ENCODE measurements at regions of chr10 and their contacts with region 1.

Region 1: DNA sequence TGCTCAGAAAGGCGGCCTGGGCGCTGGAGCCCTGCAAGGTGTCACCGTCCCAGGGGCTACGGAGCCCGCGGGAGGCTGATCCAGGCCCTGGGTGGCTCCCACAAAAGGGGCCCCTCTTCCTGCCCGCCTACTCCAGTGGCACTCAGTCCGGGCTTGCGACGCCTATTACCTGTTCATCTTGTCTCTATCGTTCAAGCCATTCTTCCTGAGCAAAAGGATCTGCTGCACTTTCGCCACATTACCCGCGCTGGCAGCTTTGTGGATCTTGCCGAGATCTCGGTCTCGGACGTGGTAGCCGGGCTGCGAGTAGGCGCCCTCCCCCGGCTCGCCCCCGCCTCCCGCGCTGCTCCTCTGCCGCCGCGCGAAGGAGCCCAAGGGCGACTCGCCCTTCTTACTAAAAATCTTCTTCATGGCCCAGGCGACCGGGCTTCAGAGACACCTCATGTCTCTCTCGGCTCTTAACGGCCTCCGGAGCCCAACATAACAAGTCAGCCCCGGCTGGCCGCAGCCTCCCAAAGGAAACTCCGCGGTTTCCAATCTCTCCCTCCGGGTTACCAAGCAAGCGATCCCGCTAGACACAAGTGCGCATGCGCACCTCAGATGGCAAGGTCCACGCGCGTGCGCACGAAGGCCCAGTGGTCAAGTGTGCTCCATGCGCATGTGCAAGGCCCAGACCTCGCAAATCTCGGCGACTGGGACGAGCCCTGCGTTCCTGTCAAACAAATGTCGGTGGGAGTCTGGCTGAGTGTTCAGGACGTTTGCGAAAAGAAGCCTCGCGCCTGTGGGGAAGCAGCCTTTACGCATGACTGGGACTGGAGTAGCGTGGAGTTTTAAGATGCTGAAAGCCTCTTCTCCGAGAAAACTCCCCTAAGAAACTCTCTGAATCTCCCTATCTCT is at the start of gene ANKRD26:
- DNase-seq: peak; percentile 98 to 99
- ATAC-seq: peak; percentile 94 to 97 (median 95)
- H3K4me3 ChIP-seq: peak within 1 kb of the TSS; percentile 99
- H3K27ac ChIP-seq: peak within 1 kb of the TSS; percentile 94
- H3K4me1 ChIP-seq: peaks cover 8% of the 10 kb centered on the region
- H3K27me3 ChIP-seq: no peaks in the 10 kb centered on the region
- CTCF ChIP-seq: no peak
- total RNA-seq, gene ANKRD26: 7.0 to 9.8 (median 8.7) TPM

Region 2: GRCh38 chr10:27147701-27148100 is 47.5 kb after region 1 on chr10:
- intact Hi-C with region 1: loop called in 1 of 2 experiments (anchors 5 kb)
- DNase-seq: no peak
- ATAC-seq: peak in 3 of 4 donors; percentile 50 to 62 (median 57)
- H3K4me3 ChIP-seq: no peak overlapping the region
- H3K27ac ChIP-seq: no peak overlapping the region
- H3K4me1 ChIP-seq: peaks cover 9% of the 10 kb centered on the region
- H3K27me3 ChIP-seq: no peaks in the 10 kb centered on the region
- CTCF ChIP-seq: no peak

Region 3: GRCh38 chr10:27625452-27626211 is 525.5 kb after region 1 on chr10:
- intact Hi-C with region 1: no loop called
- DNase-seq: no peak
- ATAC-seq: no peak
- H3K4me3 ChIP-seq: no peak overlapping the region
- H3K27ac ChIP-seq: no peak overlapping the region
- H3K4me1 ChIP-seq: no peaks in the 10 kb centered on the region
- H3K27me3 ChIP-seq: peaks cover 0 to 12% (median 0%) of the 10 kb centered on the region in 3 donors
- CTCF ChIP-seq: no peak